ENCODE measurements at regions of chr13 and their contacts with region 1.

Region 1: DNA sequence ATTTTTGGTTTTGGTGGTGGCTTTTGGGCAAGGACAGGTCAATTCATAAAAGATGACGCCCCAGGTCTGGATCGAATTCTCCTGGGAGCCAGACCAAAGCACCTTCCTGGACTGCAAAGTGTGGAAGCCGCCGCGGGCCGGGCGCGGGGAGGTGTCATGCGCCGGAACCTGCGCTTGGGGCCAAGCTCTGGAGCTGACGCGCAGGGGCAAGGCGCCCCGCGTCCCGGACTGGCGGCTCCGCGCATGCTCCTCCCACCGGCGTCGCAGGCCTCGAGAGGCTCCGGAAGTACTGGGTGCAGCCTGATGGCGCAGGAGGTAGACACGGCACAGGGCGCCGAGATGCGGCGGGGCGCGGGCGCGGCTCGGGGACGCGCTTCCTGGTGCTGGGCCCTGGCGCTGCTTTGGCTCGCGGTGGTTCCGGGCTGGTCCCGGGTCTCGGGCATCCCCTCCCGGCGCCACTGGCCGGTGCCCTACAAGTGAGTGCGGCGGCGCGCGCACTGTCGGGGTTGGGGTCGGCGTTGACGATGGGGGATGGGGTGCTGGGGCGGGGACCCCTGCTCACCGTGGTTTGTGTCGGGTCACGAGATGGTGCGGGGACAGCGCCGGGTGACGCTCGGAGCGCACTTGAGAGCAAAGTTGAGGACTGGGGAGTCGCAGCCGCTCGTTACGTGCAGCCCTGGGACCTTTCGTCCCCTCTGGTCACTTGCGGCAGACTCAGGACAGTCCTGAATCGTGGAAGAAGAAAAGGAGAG is at the start of gene CLN5:
- DNase-seq: peak in 1 of 2 donors; percentile 96
- H3K4me3 ChIP-seq: peak within 1 kb of the TSS; percentile 73 to 74
- H3K27ac ChIP-seq: peak within 1 kb of the TSS; percentile 88
- H3K4me1 ChIP-seq: peaks cover 24% of the 10 kb centered on the region
- H3K27me3 ChIP-seq: no peaks in the 10 kb centered on the region
- CTCF ChIP-seq: peak in 1 of 3 experiments; percentile 22
- POLR2A ChIP-seq: peak; percentile 10 to 94
- total RNA-seq, gene CLN5: 15.0 TPM

Region 2: GRCh38 chr13:75482070-75482819 is 1509.7 kb before region 1 on chr13 and contains the start of gene TBC1D4:
- intact Hi-C with region 1: no loop called
- DNase-seq: no peak
- H3K4me3 ChIP-seq: peak within 1 kb of the TSS; percentile 56 to 77
- H3K27ac ChIP-seq: peak within 1 kb of the TSS; percentile 72
- H3K4me1 ChIP-seq: peaks cover 23% of the 10 kb centered on the region
- H3K27me3 ChIP-seq: no peaks in the 10 kb centered on the region
- CTCF ChIP-seq: peak; percentile 16 to 77 (median 53)
- POLR2A ChIP-seq: no peak
- total RNA-seq, gene TBC1D4: 25.0 TPM

Region 3: GRCh38 chr13:77026818-77027585 is 35.0 kb after region 1 on chr13 and contains the start of gene FBXL3:
- intact Hi-C with region 1: loop called (anchors 5 kb)
- DNase-seq: peak in 1 of 2 donors; percentile 91
- H3K4me3 ChIP-seq: peak within 1 kb of the TSS; percentile 89 to 99
- H3K27ac ChIP-seq: peak within 1 kb of the TSS; percentile 100
- H3K4me1 ChIP-seq: peaks cover 51% of the 10 kb centered on the region
- H3K27me3 ChIP-seq: no peaks in the 10 kb centered on the region
- CTCF ChIP-seq: no peak
- POLR2A ChIP-seq: peak in 1 of 2 donors; percentile 66
- total RNA-seq, gene FBXL3: 59.4 TPM

Region 4: DNA sequence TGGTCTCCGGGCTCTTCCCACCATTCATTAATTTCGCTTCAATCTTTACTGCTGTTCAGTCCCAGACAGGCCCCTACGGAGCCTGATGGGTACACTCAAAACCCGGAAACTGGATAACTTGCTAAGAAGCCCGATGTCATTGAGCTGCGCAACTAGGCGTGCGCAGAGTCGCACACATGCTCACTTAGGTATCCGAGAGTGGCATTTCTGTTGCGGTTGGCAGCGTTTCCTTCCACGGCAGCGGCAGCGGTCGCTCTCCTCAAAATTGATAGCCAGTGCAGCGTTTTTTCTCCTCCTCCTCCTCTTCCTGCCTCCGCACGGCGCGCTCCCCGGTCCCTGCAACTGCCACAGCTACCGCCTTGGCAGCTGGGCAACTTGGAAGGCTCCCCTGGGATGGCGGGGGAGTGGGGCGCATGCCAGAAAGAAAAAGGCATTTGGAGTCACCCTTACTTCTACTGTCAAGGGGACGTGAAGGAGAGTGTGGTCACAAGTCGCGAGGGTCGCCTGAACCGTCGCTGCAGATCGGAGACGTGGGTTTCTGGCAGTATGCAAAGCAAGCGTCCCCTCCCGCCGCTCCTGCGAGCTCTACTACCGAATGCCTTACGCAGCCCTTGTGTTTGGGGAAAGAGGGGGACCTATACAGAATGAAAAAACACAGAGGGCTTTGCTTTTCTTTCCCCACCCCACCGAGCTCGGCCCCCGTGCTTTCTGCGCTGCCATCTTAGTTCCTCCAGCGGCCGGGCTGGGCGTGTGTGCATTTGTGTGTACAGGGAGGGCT is 337.4 kb after region 1 on chr13:
- intact Hi-C with region 1: no loop called
- DNase-seq: no peak
- H3K4me3 ChIP-seq: peak overlapping the region; percentile 82 to 84
- H3K27ac ChIP-seq: peak overlapping the region; percentile 93
- H3K4me1 ChIP-seq: peaks cover 28% of the 10 kb centered on the region
- H3K27me3 ChIP-seq: no peaks in the 10 kb centered on the region
- CTCF ChIP-seq: no peak
- POLR2A ChIP-seq: peak in 1 of 2 donors; percentile 54

Measured in vagina (tissue), 2 donors.